CD4-positive, alpha-beta memory T cell (primary cell): ENCODE measurements at regions of chr22 and their contacts with region 1.

Region 1: DNA sequence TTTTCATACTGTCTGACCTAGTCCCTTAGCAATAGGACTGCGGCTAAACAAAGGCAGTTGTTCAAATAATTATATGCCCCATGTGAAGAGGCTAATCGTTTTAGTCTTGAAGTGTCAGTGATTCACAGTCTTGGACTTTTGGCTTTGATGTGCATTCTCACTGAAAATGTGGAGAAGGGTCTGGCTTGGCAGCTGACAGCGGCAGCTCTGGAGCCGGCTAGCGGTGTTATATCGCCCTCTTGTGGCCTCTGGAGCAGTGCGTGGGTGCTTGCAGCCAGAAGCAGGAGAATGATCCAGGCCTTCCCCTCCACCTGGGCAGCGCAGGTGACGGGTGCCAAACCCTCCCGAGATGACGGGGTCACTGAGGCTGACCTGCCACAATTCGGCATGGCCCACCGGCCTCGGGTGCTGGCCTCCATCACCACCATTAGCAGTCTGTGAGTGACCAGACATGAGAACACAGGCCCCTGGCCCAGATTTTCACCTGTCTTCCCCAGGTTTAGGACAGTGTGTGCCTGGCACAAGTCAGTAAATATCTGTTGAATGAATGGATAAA is 90.3 kb upstream of the PITPNB start:
- DNase-seq: peak; percentile 57 to 67 (median 63)
- H3K4me3 ChIP-seq: no peak overlapping the region
- H3K4me3 Mint-ChIP-seq: no peak overlapping the region
- H3K27ac ChIP-seq: no peak overlapping the region
- H3K27ac Mint-ChIP-seq: no peak overlapping the region
- H3K4me1 ChIP-seq: no peaks in the 10 kb centered on the region
- H3K4me1 Mint-ChIP-seq: no peaks in the 10 kb centered on the region
- H3K27me3 ChIP-seq: no peaks in the 10 kb centered on the region
- H3K27me3 Mint-ChIP-seq: peaks cover 1 to 2% of the 10 kb centered on the region in 2 donors

Region 2: DNA sequence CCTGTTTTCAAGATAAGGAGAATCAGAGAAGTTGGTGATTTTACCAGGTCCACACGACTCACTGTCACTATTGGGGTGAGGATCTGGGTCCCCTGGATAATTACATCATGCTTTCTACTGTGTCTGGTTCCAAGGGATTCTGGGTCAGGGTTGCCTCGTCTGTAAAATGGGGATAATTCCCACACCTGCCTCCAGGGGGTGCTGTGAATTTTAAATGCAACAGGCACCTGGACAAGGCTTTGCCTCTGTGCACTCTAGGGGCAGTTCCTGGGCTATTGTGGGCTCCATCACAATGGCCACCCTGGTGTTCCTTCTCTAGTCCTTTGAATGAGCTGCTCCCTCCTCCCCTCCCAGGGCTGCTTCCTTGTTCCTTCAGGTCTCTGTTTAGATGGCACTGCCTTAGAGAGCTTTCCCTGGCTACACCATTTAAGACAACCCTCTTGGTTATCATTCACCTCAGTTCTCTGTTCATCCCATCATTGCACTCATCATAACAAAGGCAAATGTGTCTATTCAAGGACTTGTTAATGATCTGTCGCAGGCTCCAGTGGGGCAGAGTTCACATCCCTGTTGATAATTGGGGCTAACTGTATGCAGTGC is 1173.3 kb before region 1 on chr22:
- CTCF ChIA-PET with region 1: no interaction called
- POLR2A ChIA-PET with region 1: no interaction called
- intact Hi-C with region 1: loop called (anchors 5 kb)
- DNase-seq: peak in 4 of 5 donors; percentile 4 to 16 (median 10)
- H3K4me3 ChIP-seq: no peak overlapping the region
- H3K4me3 Mint-ChIP-seq: no peak overlapping the region
- H3K27ac ChIP-seq: no peak overlapping the region
- H3K27ac Mint-ChIP-seq: peak overlapping the region in 1 of 7 donors; percentile 21
- H3K4me1 ChIP-seq: no peaks in the 10 kb centered on the region
- H3K4me1 Mint-ChIP-seq: no peaks in the 10 kb centered on the region
- H3K27me3 ChIP-seq: no peaks in the 10 kb centered on the region
- H3K27me3 Mint-ChIP-seq: no peaks in the 10 kb centered on the region

Region 3: GRCh38 chr22:27804470-27805297 is 204.7 kb before region 1 on chr22:
- CTCF ChIA-PET with region 1: no interaction called
- POLR2A ChIA-PET with region 1: no interaction called
- intact Hi-C with region 1: no loop called
- DNase-seq: peak in 4 of 5 donors; percentile 33 to 40 (median 38)
- H3K4me3 ChIP-seq: no peak overlapping the region
- H3K4me3 Mint-ChIP-seq: peak overlapping the region; percentile 23 to 90 (median 74)
- H3K27ac ChIP-seq: no peak overlapping the region
- H3K27ac Mint-ChIP-seq: peak overlapping the region in 1 of 7 donors; percentile 70
- H3K4me1 ChIP-seq: peaks cover 21% of the 10 kb centered on the region
- H3K4me1 Mint-ChIP-seq: peaks cover 13 to 23% (median 15%) of the 10 kb centered on the region in 4 donors
- H3K27me3 ChIP-seq: peaks cover 6% of the 10 kb centered on the region
- H3K27me3 Mint-ChIP-seq: peaks cover 16 to 23% of the 10 kb centered on the region in 2 donors

Region 4: GRCh38 chr22:27880778-27881394 is 128.5 kb before region 1 on chr22:
- CTCF ChIA-PET with region 1: interaction called, 188 read pairs
- POLR2A ChIA-PET with region 1: no interaction called
- intact Hi-C with region 1: loop called (anchors 1 kb)
- DNase-seq: peak in 4 of 5 donors; percentile 24 to 36 (median 28)
- H3K4me3 ChIP-seq: no peak overlapping the region
- H3K4me3 Mint-ChIP-seq: no peak overlapping the region
- H3K27ac ChIP-seq: no peak overlapping the region
- H3K27ac Mint-ChIP-seq: peak overlapping the region in 1 of 7 donors; percentile 72
- H3K4me1 ChIP-seq: peaks cover 18% of the 10 kb centered on the region
- H3K4me1 Mint-ChIP-seq: peaks cover 11 to 27% (median 20%) of the 10 kb centered on the region in 4 donors
- H3K27me3 ChIP-seq: no peaks in the 10 kb centered on the region
- H3K27me3 Mint-ChIP-seq: no peaks in the 10 kb centered on the region